ENCODE measurements at regions of chrX and their contacts with region 1.

Region 1: GRCh38 chrX:96684339-96685209 is at the start of gene DIAPH2:
- DNase-seq: peak; percentile 75
- H3K4me3 Mint-ChIP-seq: peak within 1 kb of the TSS; percentile 95
- H3K27ac Mint-ChIP-seq: peak within 1 kb of the TSS; percentile 97
- H3K4me1 Mint-ChIP-seq: peaks cover 19% of the 10 kb centered on the region
- H3K27me3 Mint-ChIP-seq: no peaks in the 10 kb centered on the region
- total RNA-seq, gene DIAPH2: 14.7 and 14.9 TPM in 2 replicates

Region 2: DNA sequence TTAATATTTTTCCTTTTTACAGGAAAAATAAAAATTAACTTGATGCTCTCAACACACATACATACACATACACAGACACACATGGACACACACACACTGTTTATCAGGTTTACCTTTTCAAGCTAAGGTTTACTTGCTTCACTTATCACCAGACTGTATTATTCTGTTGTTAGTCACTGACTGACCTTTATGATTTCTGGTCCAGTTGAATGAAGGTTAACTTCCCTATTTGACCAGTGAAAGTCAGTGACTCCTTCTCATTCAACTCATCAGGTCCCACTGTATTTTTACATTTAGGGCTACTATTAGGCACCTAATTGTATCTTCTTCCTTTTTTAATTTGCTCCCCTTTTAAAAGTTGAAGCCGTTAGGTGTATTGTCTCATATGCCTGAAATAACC is 16.1 kb after region 1 on chrX:
- intact Hi-C with region 1: no loop called
- DNase-seq: no peak
- H3K4me3 Mint-ChIP-seq: no peak overlapping the region
- H3K27ac Mint-ChIP-seq: no peak overlapping the region
- H3K4me1 Mint-ChIP-seq: no peaks in the 10 kb centered on the region
- H3K27me3 Mint-ChIP-seq: no peaks in the 10 kb centered on the region

Region 3: GRCh38 chrX:96721354-96721753 is 36.8 kb after region 1 on chrX:
- intact Hi-C with region 1: loop called (anchors 1 kb)
- DNase-seq: no peak
- H3K4me3 Mint-ChIP-seq: no peak overlapping the region
- H3K27ac Mint-ChIP-seq: no peak overlapping the region
- H3K4me1 Mint-ChIP-seq: peaks cover 2% of the 10 kb centered on the region
- H3K27me3 Mint-ChIP-seq: no peaks in the 10 kb centered on the region

Region 4: GRCh38 chrX:96764864-96765263 is 80.3 kb after region 1 on chrX:
- intact Hi-C with region 1: loop called (anchors 10 kb)
- DNase-seq: no peak
- H3K4me3 Mint-ChIP-seq: no peak overlapping the region
- H3K27ac Mint-ChIP-seq: no peak overlapping the region
- H3K4me1 Mint-ChIP-seq: peaks cover 11% of the 10 kb centered on the region
- H3K27me3 Mint-ChIP-seq: no peaks in the 10 kb centered on the region

Region 5: GRCh38 chrX:97096385-97096784 is 411.8 kb after region 1 on chrX:
- intact Hi-C with region 1: no loop called
- DNase-seq: no peak
- H3K4me3 Mint-ChIP-seq: no peak overlapping the region
- H3K27ac Mint-ChIP-seq: no peak overlapping the region
- H3K4me1 Mint-ChIP-seq: peaks cover 2% of the 10 kb centered on the region
- H3K27me3 Mint-ChIP-seq: no peaks in the 10 kb centered on the region